ENCODE measurements at regions of chr5 and their contacts with region 1.

Region 1: DNA sequence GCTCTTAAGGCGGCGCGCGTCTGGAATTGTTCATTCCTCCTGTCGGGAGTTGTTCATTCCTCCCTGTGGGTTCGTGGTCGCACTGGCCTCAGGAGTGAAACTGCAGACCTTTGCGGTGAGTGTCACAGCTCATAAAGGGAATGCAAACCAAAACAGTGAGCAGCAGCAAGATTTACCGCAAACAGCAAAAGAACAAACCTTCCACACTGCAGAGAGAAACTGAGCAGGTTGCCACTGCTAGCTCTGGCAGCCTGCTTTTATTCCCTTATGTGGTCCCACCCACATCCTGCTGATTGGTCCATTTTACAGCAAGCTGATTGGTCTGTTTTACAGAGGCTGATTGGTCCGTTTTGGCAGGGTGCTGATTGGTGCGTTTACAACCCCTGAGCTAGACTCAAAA is 1365.3 kb upstream of the WWC1 start:
- ATAC-seq: no peak
- H3K4me3 ChIP-seq: no peak overlapping the region
- H3K27ac ChIP-seq: no peak overlapping the region
- H3K4me1 ChIP-seq: no peaks in the 10 kb centered on the region

Region 2: GRCh38 chr5:166293892-166294291 is 632.2 kb before region 1 on chr5:
- in situ Hi-C with region 1: no loop called
- ATAC-seq: no peak
- H3K4me3 ChIP-seq: no peak overlapping the region
- H3K27ac ChIP-seq: no peak overlapping the region
- H3K4me1 ChIP-seq: no peaks in the 10 kb centered on the region

Region 3: GRCh38 chr5:167573370-167574127 is 647.4 kb after region 1 on chr5:
- in situ Hi-C with region 1: loop called in 1 of 9 experiments (anchors 25 kb)
- ATAC-seq: peak; percentile 85 to 93 (median 88)
- H3K4me3 ChIP-seq: peak overlapping the region; percentile 41 to 52 (median 49)
- H3K27ac ChIP-seq: peak overlapping the region; percentile 40 to 75
- H3K4me1 ChIP-seq: peaks cover 10 to 40% of the 10 kb centered on the region in 2 donors